ENCODE measurements at regions of chr3 and their contacts with region 1.

Region 1: DNA sequence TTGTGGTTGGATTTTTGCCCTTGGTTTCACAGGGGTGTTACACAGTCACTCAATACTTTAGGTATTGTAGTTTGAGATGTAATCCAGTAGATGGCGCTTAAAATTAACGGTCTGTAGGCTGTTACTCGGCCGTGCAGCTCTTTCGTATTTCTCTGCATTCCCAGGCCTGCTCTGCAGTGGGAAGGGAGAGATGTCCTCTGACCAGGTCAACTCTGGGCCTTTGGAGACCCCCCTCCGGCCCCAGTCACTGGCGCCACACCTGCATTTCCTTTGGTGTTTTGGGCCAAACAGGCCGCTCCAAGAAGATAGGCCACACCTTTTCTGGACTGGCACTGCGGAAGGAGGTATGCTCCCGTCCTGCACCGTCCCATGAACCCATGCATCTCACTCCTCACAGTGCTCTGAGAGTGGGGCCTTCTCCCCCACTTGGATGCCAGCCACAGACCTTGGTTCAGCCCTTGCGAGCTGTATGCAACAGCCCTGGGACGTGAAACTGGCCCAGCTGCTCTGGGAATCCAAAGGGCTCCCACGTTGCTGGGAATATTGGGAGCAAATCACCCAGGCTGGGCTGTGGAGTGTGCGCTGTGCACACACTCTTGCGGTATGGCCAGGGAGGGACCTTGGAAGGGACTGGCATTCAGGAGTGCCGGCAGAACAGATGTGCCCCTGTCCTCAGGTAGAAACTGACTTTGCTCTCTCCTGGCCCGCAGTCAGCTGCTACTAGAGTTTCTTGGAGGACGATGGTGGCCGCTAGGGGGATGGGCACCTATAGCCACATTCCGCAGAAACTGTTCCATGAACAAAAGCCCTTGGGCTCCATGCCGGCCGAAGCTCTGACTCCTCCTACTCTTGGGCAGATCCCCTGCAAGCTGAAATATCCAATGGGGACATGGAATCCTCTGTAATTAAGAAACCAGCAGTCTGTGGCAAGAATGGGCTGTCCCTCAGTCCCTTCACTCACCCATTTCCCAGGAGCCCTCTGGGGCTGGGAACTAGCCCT is 410.5 kb upstream of the CADM2 start:
- DNase-seq: peak in 1 of 2 experiments; percentile 68
- H3K4me3 ChIP-seq: no peak overlapping the region
- H3K27ac ChIP-seq: no peak overlapping the region
- H3K4me1 ChIP-seq: no peaks in the 10 kb centered on the region
- H3K27me3 ChIP-seq: no peaks in the 10 kb centered on the region
- CTCF ChIP-seq: peak; percentile 81

Region 2: DNA sequence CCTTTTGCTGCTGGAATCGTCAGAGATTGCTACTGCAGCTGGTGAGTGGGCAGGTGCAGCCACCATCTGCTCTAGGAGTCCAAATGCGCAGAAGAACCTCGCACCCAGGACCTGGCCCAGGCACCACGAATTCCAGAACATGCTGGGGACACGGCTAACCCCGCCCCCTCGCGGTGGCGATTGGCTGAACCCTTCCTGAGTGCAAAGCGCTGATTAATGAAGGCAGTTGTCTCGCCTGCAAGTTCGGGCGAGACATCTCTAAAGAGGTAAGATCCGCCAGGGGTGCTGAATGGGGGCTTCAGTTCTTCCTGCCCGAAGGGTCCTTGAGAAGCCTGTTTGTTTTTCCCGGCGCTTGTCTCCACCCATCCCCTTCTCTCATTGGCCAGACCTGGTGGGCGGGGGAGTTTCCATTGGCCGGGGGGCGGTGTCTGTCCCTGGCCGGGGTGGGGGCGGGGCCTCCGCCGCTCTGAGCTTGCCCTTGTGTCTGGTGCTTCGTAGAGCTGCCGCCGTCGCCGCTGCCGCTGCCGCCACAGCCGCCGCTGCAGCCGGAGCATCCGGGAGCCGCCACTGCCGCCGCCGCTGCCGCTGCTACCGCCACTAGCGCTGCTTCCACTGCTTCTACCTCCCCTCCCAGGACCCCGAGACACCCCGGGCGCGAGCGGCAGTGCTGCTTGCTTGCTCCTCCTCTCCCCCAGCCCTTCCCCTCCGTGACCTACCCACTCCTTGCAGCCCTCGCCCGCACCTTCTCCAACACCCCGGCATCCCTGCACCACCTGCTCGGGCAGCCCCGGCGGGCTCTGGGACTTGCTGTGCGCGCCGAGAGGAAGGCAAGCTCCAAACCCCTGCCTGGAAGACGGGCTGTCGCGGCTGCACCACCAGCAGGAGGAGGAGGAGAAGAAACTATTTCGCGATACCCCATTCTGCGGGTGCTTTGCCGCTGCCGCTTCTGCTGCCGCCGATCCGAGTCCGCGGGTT is 410.5 kb after region 1 on chr3 and contains the start of gene CADM2:
- CTCF ChIA-PET with region 1: no interaction called
- POLR2A ChIA-PET with region 1: no interaction called
- intact Hi-C with region 1: loop called (anchors 5 kb)
- DNase-seq: peak; percentile 71 to 83
- H3K4me3 ChIP-seq: peak within 1 kb of the TSS; percentile 71
- H3K27ac ChIP-seq: no peak within 1 kb of the TSS
- H3K4me1 ChIP-seq: no peaks in the 10 kb centered on the region; the same call in 1 of the 2 replicates
- H3K27me3 ChIP-seq: peaks cover 7% of the 10 kb centered on the region; the same call in 1 of the 2 replicates
- CTCF ChIP-seq: peak; percentile 64
- total RNA-seq, gene CADM2: 0.59 and 0.70 TPM in 2 replicates

Region 3: GRCh38 chr3:85020828-85021227 is 472.6 kb after region 1 on chr3:
- CTCF ChIA-PET with region 1: no interaction called
- POLR2A ChIA-PET with region 1: no interaction called
- intact Hi-C with region 1: no loop called
- DNase-seq: no peak
- H3K4me3 ChIP-seq: no peak overlapping the region
- H3K27ac ChIP-seq: no peak overlapping the region
- H3K4me1 ChIP-seq: no peaks in the 10 kb centered on the region
- H3K27me3 ChIP-seq: no peaks in the 10 kb centered on the region
- CTCF ChIP-seq: no peak

Region 4: DNA sequence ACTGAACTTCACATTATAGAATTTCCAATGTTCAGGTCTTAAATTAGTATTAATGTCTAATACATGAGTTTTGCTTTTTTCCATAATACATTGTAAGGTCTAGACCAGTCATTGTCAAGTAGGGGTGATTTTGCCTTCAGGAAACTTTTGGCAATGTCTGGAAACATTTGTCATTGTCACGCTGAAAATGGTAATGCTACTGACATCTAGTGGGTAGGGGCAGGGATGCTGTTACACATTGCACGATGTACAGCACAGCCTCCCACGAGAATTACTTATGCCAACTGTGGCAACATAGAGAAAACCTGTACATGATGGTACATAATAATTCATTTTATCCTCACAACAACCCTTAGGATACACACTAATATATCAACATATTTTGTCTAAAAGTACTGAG is 794.6 kb after region 1 on chr3:
- CTCF ChIA-PET with region 1: no interaction called
- POLR2A ChIA-PET with region 1: no interaction called
- intact Hi-C with region 1: loop called (anchors 1 kb)
- DNase-seq: no peak
- H3K4me3 ChIP-seq: no peak overlapping the region
- H3K27ac ChIP-seq: no peak overlapping the region
- H3K4me1 ChIP-seq: no peaks in the 10 kb centered on the region
- H3K27me3 ChIP-seq: no peaks in the 10 kb centered on the region
- CTCF ChIP-seq: peak; percentile 63

Region 5: GRCh38 chr3:85360742-85361387 is 812.6 kb after region 1 on chr3:
- CTCF ChIA-PET with region 1: no interaction called
- POLR2A ChIA-PET with region 1: no interaction called
- intact Hi-C with region 1: loop called (anchors 2 kb)
- DNase-seq: peak in 1 of 2 experiments; percentile 55
- H3K4me3 ChIP-seq: no peak overlapping the region
- H3K27ac ChIP-seq: no peak overlapping the region
- H3K4me1 ChIP-seq: no peaks in the 10 kb centered on the region
- H3K27me3 ChIP-seq: no peaks in the 10 kb centered on the region
- CTCF ChIP-seq: peak; percentile 77

Region 6: DNA sequence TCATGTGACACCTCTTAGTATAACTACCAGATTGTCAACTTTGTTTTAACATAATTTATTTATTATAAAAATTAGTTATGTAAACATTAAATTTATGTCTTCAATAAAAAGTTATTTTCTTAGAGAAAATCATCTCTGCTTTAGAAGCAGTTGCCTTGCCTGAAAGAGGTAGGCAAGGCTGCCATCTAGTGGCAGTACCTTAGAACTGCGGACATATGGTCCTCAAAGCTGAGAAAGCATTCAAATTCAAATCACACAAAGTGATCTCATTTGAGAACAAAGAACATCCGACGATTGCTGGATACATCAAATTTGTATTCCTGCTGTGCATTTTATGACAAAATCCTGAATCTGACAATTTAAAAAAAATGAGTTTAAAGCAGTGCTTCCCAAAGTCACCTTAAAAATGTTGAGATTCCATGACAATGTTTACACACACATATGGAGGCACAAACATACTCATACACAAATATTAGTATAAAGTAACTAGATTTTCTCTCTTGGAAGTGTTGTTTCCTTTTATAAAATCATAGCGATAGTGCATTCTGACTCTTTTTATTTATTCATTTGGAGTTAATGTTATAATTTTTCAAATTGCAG is 1027.9 kb after region 1 on chr3:
- CTCF ChIA-PET with region 1: no interaction called
- POLR2A ChIA-PET with region 1: no interaction called
- intact Hi-C with region 1: loop called (anchors 10 kb)
- DNase-seq: peak in 1 of 2 experiments; percentile 47
- H3K4me3 ChIP-seq: no peak overlapping the region
- H3K27ac ChIP-seq: no peak overlapping the region
- H3K4me1 ChIP-seq: no peaks in the 10 kb centered on the region
- H3K27me3 ChIP-seq: no peaks in the 10 kb centered on the region
- CTCF ChIP-seq: peak; percentile 88

Region 7: DNA sequence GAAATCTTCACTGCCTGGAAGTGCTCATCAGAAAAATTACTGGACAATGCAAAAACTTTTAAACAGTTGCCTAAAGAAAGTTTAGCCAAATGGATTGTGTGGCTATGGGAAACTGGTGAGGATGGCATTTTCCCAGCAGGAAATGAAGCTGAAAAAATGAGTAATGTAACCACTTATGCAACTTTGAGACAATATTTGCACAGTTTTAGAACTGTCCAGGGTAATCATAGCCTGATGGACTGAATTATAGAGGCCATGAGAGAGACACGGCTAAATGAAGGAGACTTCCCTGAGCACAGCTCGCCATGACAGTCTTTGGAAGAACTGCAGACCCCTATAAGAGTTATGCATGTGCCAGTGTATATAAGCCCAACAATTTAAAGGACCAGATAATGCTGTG is 1561.2 kb after region 1 on chr3:
- CTCF ChIA-PET with region 1: no interaction called
- POLR2A ChIA-PET with region 1: no interaction called
- intact Hi-C with region 1: no loop called
- DNase-seq: no peak
- H3K4me3 ChIP-seq: no peak overlapping the region
- H3K27ac ChIP-seq: no peak overlapping the region
- H3K4me1 ChIP-seq: no peaks in the 10 kb centered on the region
- H3K27me3 ChIP-seq: no peaks in the 10 kb centered on the region
- CTCF ChIP-seq: no peak